CD4-positive, alpha-beta T cell (primary cell): ENCODE measurements at regions of chrX and their contacts with region 1.

Region 1: GRCh38 chrX:79107891-79108718 is 36.4 kb upstream of the GPR174 start:
- DNase-seq: peak in 3 of 14 experiments; percentile 75 to 83 (median 82)
- ATAC-seq: peak; percentile 91
- H3K4me3 ChIP-seq: peak overlapping the region; percentile 9
- H3K4me3 Mint-ChIP-seq: peak overlapping the region; percentile 67
- H3K27ac ChIP-seq: peak overlapping the region; percentile 90 to 97
- H3K27ac Mint-ChIP-seq: peak overlapping the region; percentile 97
- H3K4me1 ChIP-seq: peaks cover 26% of the 10 kb centered on the region
- H3K4me1 Mint-ChIP-seq: peaks cover 61% of the 10 kb centered on the region
- H3K27me3 ChIP-seq: no peaks in the 10 kb centered on the region
- H3K27me3 Mint-ChIP-seq: no peaks in the 10 kb centered on the region
- CTCF ChIP-seq: no peak

Region 2: DNA sequence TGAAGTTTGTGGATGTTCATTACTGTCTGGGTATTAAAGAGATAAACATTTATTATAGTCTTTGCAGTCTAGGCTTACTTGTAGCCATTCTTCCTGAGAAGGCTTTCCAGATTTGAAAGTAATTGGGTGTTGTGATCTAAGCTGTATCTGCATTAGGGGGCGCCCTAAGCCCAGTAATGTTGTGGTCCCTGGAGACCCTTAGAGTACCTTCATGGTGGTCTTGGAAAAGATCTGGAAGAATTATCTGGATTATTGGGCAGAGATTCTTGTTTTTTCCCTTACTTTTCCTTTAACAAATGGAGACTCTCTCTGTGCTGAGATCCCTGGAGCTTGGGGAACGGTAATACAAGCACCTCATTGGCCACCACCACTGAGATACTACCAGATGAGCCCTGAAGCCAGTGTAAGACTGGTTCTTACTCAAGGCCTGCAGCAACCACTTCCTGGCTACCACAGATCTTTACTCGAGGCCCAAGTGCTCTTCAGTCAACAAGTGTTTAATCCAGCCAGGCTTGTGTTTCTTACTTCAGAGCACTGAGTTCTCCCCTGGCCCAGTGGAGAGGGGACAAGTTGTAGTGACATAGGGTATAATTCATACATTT is 512.1 kb before region 1 on chrX:
- CTCF ChIA-PET with region 1: no interaction called
- POLR2A ChIA-PET with region 1: no interaction called
- intact Hi-C with region 1: no loop called
- DNase-seq: peak in 1 of 14 experiments; percentile 3
- ATAC-seq: no peak
- H3K4me3 ChIP-seq: no peak overlapping the region
- H3K4me3 Mint-ChIP-seq: no peak overlapping the region
- H3K27ac ChIP-seq: no peak overlapping the region
- H3K27ac Mint-ChIP-seq: no peak overlapping the region
- H3K4me1 ChIP-seq: no peaks in the 10 kb centered on the region
- H3K4me1 Mint-ChIP-seq: no peaks in the 10 kb centered on the region
- H3K27me3 ChIP-seq: no peaks in the 10 kb centered on the region
- H3K27me3 Mint-ChIP-seq: no peaks in the 10 kb centered on the region
- CTCF ChIP-seq: no peak

Region 3: DNA sequence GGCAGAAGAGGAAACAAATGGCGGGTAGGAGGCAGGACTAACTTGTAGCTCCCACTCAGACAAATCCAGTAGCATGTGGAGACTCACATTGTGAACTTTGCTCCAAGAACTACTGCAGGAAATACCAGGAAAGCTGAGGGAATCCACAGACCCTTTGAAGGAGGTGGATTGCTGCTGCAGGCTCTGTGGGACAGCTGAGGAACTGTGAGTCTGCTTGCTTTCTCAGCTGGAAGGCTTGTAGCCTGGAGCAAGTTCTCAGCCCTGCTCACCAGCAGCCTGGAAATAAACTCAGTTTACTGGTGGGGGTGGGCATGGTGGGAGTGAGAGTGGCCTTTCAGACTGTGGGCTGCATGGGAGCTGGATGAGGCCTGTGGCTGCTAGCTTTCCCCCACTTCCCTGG is 465.0 kb before region 1 on chrX:
- CTCF ChIA-PET with region 1: no interaction called
- POLR2A ChIA-PET with region 1: no interaction called
- intact Hi-C with region 1: no loop called
- DNase-seq: no peak
- ATAC-seq: no peak
- H3K4me3 ChIP-seq: no peak overlapping the region
- H3K4me3 Mint-ChIP-seq: no peak overlapping the region
- H3K27ac ChIP-seq: no peak overlapping the region
- H3K27ac Mint-ChIP-seq: no peak overlapping the region
- H3K4me1 ChIP-seq: peaks cover 10% of the 10 kb centered on the region
- H3K4me1 Mint-ChIP-seq: peaks cover 13% of the 10 kb centered on the region
- H3K27me3 ChIP-seq: no peaks in the 10 kb centered on the region
- H3K27me3 Mint-ChIP-seq: no peaks in the 10 kb centered on the region
- CTCF ChIP-seq: no peak

Region 4: GRCh38 chrX:78910010-78910409 is 198.1 kb before region 1 on chrX:
- CTCF ChIA-PET with region 1: no interaction called
- POLR2A ChIA-PET with region 1: no interaction called
- intact Hi-C with region 1: no loop called
- DNase-seq: no peak
- ATAC-seq: no peak
- H3K4me3 ChIP-seq: no peak overlapping the region
- H3K4me3 Mint-ChIP-seq: no peak overlapping the region
- H3K27ac ChIP-seq: no peak overlapping the region
- H3K27ac Mint-ChIP-seq: no peak overlapping the region
- H3K4me1 ChIP-seq: no peaks in the 10 kb centered on the region
- H3K4me1 Mint-ChIP-seq: no peaks in the 10 kb centered on the region
- H3K27me3 ChIP-seq: no peaks in the 10 kb centered on the region
- H3K27me3 Mint-ChIP-seq: no peaks in the 10 kb centered on the region
- CTCF ChIP-seq: no peak

Region 5: DNA sequence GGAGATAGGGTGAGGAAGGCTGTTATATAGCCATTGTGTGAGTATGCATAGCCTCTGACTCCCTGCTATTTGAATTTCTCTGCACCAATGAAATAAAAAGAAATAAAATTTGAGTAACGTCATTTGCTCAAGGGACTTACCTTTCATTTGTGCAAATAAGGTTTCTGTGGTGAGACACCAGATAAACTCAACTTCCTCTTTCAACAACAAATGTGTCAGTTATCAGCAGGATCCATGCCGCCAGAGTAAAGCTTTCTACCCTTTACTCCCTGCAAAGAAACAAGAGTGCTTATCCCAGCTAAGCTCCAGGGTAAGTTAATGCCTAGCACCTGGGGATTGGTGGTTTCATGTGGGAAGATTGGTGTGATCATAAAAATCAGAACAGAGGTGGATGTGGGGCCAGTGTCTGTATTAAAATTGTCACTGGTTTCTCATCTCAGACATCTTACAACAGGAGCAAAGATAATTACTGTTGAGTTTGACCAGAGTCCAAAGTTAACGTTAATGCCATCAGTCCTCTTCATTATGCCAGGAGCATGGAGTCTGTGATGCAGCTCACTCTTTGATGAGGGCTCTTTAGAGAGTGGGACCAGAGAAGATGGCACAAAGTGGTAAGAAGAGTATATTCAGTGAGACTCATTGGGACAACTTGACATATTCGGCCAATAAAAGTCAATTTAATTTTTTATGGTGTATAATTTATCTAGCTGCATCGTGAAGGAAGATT is 162.8 kb before region 1 on chrX and contains the start of gene P2RY10:
- CTCF ChIA-PET with region 1: no interaction called
- POLR2A ChIA-PET with region 1: interaction called, 14 read pairs
- intact Hi-C with region 1: no loop called
- DNase-seq: peak in 12 of 14 experiments; percentile 7 to 85 (median 29)
- ATAC-seq: peak; percentile 87
- H3K4me3 ChIP-seq: peak within 1 kb of the TSS; percentile 77
- H3K4me3 Mint-ChIP-seq: peak within 1 kb of the TSS; percentile 93
- H3K27ac ChIP-seq: peak within 1 kb of the TSS; percentile 68 to 83
- H3K27ac Mint-ChIP-seq: peak within 1 kb of the TSS; percentile 96
- H3K4me1 ChIP-seq: peaks cover 7% of the 10 kb centered on the region
- H3K4me1 Mint-ChIP-seq: peaks cover 73% of the 10 kb centered on the region
- H3K27me3 ChIP-seq: no peaks in the 10 kb centered on the region
- H3K27me3 Mint-ChIP-seq: no peaks in the 10 kb centered on the region
- CTCF ChIP-seq: no peak
- total RNA-seq, gene P2RY10: 85.3 to 98.5 TPM

Region 6: GRCh38 chrX:78997870-78998558 is 110.1 kb before region 1 on chrX:
- CTCF ChIA-PET with region 1: no interaction called
- POLR2A ChIA-PET with region 1: no interaction called
- intact Hi-C with region 1: no loop called
- DNase-seq: peak in 12 of 14 experiments; percentile 0 to 66 (median 10)
- ATAC-seq: peak; percentile 48
- H3K4me3 ChIP-seq: no peak overlapping the region
- H3K4me3 Mint-ChIP-seq: peak overlapping the region; percentile 11
- H3K27ac ChIP-seq: no peak overlapping the region
- H3K27ac Mint-ChIP-seq: no peak overlapping the region
- H3K4me1 ChIP-seq: peaks cover 9% of the 10 kb centered on the region
- H3K4me1 Mint-ChIP-seq: peaks cover 6% of the 10 kb centered on the region
- H3K27me3 ChIP-seq: no peaks in the 10 kb centered on the region
- H3K27me3 Mint-ChIP-seq: no peaks in the 10 kb centered on the region
- CTCF ChIP-seq: no peak

Region 7: GRCh38 chrX:79089896-79090584 is 18.1 kb before region 1 on chrX:
- CTCF ChIA-PET with region 1: interaction called, 6 read pairs
- POLR2A ChIA-PET with region 1: interaction called, 22 read pairs
- intact Hi-C with region 1: no loop called
- DNase-seq: no peak
- ATAC-seq: no peak
- H3K4me3 ChIP-seq: no peak overlapping the region
- H3K4me3 Mint-ChIP-seq: peak overlapping the region; percentile 8
- H3K27ac ChIP-seq: peak overlapping the region; percentile 7 to 9
- H3K27ac Mint-ChIP-seq: peak overlapping the region; percentile 68
- H3K4me1 ChIP-seq: peaks cover 12% of the 10 kb centered on the region
- H3K4me1 Mint-ChIP-seq: peaks cover 59% of the 10 kb centered on the region
- H3K27me3 ChIP-seq: no peaks in the 10 kb centered on the region
- H3K27me3 Mint-ChIP-seq: no peaks in the 10 kb centered on the region
- CTCF ChIP-seq: no peak

Region 8: DNA sequence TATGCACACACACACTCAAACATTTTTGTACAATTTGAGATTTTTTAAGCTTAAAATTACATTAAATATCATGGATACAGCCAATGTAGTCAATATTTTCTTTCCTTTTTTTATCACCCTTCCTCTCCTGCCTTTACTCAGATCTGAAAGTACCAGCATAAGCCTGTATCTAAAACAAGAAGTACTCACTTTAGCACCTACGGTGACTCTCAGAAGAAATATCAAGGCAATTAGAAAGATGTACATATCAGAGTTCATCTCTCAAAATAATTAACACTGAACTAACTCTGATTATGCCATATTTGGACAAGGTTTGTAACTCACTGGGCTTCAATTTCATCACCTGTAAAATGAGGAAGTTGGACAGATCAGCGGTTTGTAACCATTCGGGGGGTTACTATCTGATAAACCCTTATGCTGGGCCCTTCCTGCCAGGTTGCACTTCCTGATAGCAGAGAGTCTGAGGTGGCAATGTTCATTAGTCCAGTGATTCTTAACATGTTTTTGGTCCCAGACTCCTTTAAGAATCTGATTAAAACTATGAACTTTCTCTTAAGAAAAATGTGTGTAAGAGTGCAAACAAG is 30.6 kb after region 1 on chrX:
- CTCF ChIA-PET with region 1: interaction called, 4 read pairs
- POLR2A ChIA-PET with region 1: interaction called, 79 read pairs
- intact Hi-C with region 1: loop called in 1 of 2 experiments (anchors 5 kb)
- DNase-seq: peak in 3 of 14 experiments; percentile 43 to 64 (median 53)
- ATAC-seq: no peak
- H3K4me3 ChIP-seq: no peak overlapping the region
- H3K4me3 Mint-ChIP-seq: peak overlapping the region; percentile 45
- H3K27ac ChIP-seq: peak overlapping the region in 1 of 2 donors; percentile 44
- H3K27ac Mint-ChIP-seq: peak overlapping the region; percentile 89
- H3K4me1 ChIP-seq: peaks cover 14% of the 10 kb centered on the region
- H3K4me1 Mint-ChIP-seq: peaks cover 64% of the 10 kb centered on the region
- H3K27me3 ChIP-seq: no peaks in the 10 kb centered on the region
- H3K27me3 Mint-ChIP-seq: no peaks in the 10 kb centered on the region
- CTCF ChIP-seq: no peak

Region 9: GRCh38 chrX:79153348-79153747 is 45.2 kb after region 1 on chrX:
- CTCF ChIA-PET with region 1: interaction called, 3 read pairs
- POLR2A ChIA-PET with region 1: interaction called, 55 read pairs
- intact Hi-C with region 1: loop called in 1 of 2 experiments (anchors 5 kb)
- DNase-seq: no peak
- ATAC-seq: no peak
- H3K4me3 ChIP-seq: peak overlapping the region; percentile 80
- H3K4me3 Mint-ChIP-seq: peak overlapping the region; percentile 86
- H3K27ac ChIP-seq: peak overlapping the region; percentile 48 to 78
- H3K27ac Mint-ChIP-seq: peak overlapping the region; percentile 95
- H3K4me1 ChIP-seq: peaks cover 15% of the 10 kb centered on the region
- H3K4me1 Mint-ChIP-seq: peaks cover 80% of the 10 kb centered on the region
- H3K27me3 ChIP-seq: no peaks in the 10 kb centered on the region
- H3K27me3 Mint-ChIP-seq: no peaks in the 10 kb centered on the region
- CTCF ChIP-seq: no peak

Region 10: DNA sequence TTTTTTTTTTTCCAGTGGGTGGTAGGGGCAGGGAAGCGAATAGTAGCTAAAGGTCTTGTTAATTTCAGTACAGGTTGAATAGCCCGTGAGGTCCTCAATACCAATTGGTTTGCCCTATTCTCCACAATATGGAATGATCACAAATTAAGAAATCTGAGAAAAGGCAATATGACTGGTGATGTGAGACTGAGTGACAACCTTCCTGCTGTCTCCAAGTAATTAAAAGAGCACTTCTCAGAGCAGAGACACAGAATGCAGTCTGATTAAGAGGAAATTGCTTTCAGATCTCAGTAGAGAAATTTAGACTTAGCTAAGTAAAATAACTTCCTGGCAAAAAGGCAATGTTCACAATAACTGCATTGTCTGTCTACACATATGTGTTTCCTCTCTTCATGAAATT is 59.4 kb after region 1 on chrX:
- CTCF ChIA-PET with region 1: interaction called, 3 read pairs
- POLR2A ChIA-PET with region 1: interaction called, 15 read pairs
- intact Hi-C with region 1: no loop called
- DNase-seq: peak in 1 of 14 experiments; percentile 54
- ATAC-seq: peak; percentile 41
- H3K4me3 ChIP-seq: peak overlapping the region; percentile 5
- H3K4me3 Mint-ChIP-seq: peak overlapping the region; percentile 76
- H3K27ac ChIP-seq: peak overlapping the region; percentile 69 to 70
- H3K27ac Mint-ChIP-seq: peak overlapping the region; percentile 97
- H3K4me1 ChIP-seq: peaks cover 46% of the 10 kb centered on the region
- H3K4me1 Mint-ChIP-seq: peaks cover 94% of the 10 kb centered on the region
- H3K27me3 ChIP-seq: no peaks in the 10 kb centered on the region
- H3K27me3 Mint-ChIP-seq: no peaks in the 10 kb centered on the region
- CTCF ChIP-seq: no peak

Region 11: GRCh38 chrX:79270401-79270800 is 162.3 kb after region 1 on chrX:
- CTCF ChIA-PET with region 1: interaction called, 9 read pairs
- POLR2A ChIA-PET with region 1: interaction called, 10 read pairs
- intact Hi-C with region 1: no loop called
- DNase-seq: peak; percentile 55 to 88 (median 72)
- ATAC-seq: peak; percentile 95
- H3K4me3 ChIP-seq: no peak overlapping the region
- H3K4me3 Mint-ChIP-seq: peak overlapping the region; percentile 53
- H3K27ac ChIP-seq: peak overlapping the region; percentile 3 to 29
- H3K27ac Mint-ChIP-seq: peak overlapping the region; percentile 87
- H3K4me1 ChIP-seq: peaks cover 3% of the 10 kb centered on the region
- H3K4me1 Mint-ChIP-seq: peaks cover 59% of the 10 kb centered on the region
- H3K27me3 ChIP-seq: no peaks in the 10 kb centered on the region
- H3K27me3 Mint-ChIP-seq: no peaks in the 10 kb centered on the region
- CTCF ChIP-seq: peak; percentile 75